ENCODE measurements at regions of chr20 and their contacts with region 1.

Region 1: DNA sequence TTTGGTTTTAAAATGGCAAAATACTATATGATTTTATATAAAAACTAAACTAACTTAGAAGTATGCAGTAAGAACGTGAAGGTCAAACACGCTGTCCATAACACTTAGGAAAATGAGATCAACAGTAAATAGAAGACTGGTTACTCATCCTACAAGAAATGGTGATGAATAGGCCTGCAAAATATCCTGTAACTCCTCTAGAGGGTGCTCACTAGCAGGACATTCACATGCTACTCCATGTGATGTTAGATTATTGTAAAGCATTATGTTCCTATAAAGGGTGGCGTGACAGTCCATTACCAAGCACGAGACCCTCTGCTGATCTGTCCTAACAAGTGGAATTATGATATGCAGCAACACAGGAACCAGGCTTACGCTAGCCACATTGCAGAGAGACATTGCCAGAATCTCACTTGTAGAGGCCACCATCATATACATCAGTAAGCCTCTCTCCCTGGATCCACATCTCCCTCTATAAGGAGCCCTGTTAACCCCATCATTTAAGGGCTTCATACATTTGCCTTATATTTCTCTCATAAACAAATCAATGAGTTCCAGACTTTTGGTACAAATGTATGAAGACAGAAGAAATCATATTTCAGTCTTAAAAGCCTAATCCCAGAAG is 18.0 kb upstream of the DEFB129 start:
- DNase-seq: peak; percentile 31 to 71
- H3K4me3 ChIP-seq: no peak overlapping the region
- H3K4me1 ChIP-seq: no peaks in the 10 kb centered on the region
- H3K27me3 ChIP-seq: peaks cover 6% of the 10 kb centered on the region

Region 2: DNA sequence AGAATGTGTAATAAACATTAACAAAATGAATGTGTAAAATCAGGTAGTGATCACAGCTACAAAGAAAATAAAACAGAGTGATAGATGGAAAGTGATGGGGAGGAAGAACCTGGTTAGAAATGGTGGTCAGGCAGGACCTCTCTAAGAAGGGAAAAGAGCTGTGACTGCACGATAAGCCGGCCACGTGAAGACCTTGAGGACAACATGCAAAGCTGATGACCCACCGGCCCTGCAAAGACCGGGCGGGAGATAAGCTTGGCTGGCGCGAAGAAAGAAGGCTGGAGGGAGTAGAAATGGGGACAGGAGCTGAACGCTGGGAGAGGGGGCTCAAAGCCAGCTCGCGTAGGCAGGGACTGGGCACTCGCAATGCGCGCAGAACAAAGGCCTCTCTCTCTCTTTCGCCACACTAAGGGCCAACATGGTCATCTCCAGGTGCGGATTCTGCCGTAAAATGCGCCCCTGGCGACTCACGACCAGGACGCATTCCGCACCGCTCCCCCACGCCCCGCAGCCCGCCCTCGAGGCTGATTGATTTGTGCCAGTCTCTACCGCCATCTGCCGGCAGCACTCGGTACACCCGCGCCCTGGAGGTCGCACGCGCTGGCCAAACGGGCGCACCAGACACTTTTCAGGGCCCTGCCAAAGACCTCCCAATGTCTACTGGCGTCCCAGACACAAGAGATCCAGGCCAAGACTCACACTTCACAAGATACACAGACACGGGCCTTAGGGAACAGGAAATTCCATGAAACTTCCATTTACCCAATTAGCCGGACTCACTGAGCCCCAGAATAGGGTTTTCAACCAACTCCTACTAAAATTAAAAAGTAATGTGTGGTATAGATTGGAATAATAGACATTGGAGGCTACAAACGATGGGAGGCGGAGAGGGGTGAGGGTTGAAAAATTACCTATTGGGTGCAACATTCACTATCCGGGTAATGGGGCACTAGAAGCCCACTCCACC is 57.8 kb after region 1 on chr20:
- in situ Hi-C with region 1: loop called (anchors 5 kb)
- DNase-seq: peak; percentile 71 to 97
- H3K4me3 ChIP-seq: peak overlapping the region; percentile 26
- H3K4me1 ChIP-seq: peaks cover 4% of the 10 kb centered on the region
- H3K27me3 ChIP-seq: no peaks in the 10 kb centered on the region